Naive thymus-derived CD4-positive, alpha-beta T cell (primary cell): ENCODE measurements at regions of chr11 and their contacts with region 1.

Region 1: DNA sequence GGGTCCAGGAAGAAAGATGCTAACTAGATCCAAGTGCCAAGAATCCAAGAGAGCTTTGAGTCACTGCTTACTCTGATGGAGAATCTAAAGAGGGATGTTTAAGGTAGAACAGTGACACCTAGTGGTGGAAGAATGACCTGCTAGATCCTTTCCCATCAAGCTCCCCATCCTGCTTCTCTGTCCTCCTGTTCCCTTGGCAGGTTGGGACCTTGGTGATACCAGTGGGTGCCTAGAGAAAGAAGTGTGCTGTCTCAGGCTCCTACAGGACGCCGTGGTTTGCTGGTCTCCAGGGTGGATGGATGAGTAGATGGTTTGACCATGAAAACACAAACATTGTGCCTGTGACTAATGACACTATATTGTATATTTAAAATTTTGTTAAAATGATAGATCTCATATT is 383.7 kb downstream of the TMEM135 start:
- DNase-seq: peak in 7 of 9 donors; percentile 12 to 50 (median 27)
- ATAC-seq: peak; percentile 61
- H3K4me3 ChIP-seq: no peak overlapping the region
- H3K4me3 Mint-ChIP-seq: no peak overlapping the region
- H3K27ac ChIP-seq: no peak overlapping the region
- H3K27ac Mint-ChIP-seq: no peak overlapping the region
- H3K4me1 ChIP-seq: no peaks in the 10 kb centered on the region
- H3K4me1 Mint-ChIP-seq: no peaks in the 10 kb centered on the region
- H3K27me3 ChIP-seq: no peaks in the 10 kb centered on the region
- H3K27me3 Mint-ChIP-seq: peaks cover 0 to 12% (median 0%) of the 10 kb centered on the region in 5 donors

Region 2: DNA sequence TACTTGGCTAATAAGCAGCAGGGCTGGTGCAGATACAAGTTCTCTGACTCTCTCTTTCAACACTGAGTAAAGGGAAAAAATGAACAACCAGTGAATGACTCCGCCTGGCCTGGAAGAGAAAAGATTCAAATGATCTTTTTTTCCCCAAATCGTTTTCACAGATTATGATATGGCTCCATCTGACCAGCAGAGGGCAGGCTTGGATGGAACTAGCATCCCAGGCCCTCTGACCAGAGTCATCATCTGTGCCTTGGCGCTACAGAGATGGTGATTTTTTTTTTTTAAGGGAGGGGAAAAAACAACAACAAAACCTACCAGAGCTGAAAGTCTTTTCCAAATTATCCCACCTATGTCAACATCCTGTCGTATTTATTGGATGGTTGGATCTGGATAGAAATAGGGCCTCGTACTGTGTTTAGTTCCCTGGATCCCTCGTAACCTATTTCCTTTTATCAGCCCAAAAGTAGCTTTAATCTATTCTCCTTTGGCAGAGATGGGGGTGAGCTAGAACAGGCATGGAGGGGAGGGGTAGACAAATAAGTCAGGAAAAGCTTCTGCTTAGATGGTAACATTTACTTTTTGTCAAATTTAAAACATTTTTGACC is 551.4 kb before region 1 on chr11:
- CTCF ChIA-PET with region 1: no interaction called
- POLR2A ChIA-PET with region 1: no interaction called
- intact Hi-C with region 1: loop called (anchors 1 to 10 kb)
- DNase-seq: peak in 6 of 9 donors; percentile 3 to 44 (median 13)
- ATAC-seq: peak; percentile 76
- H3K4me3 ChIP-seq: no peak overlapping the region
- H3K4me3 Mint-ChIP-seq: no peak overlapping the region
- H3K27ac ChIP-seq: no peak overlapping the region
- H3K27ac Mint-ChIP-seq: no peak overlapping the region
- H3K4me1 ChIP-seq: no peaks in the 10 kb centered on the region
- H3K4me1 Mint-ChIP-seq: peaks cover 0 to 2% (median 0%) of the 10 kb centered on the region in 7 donors
- H3K27me3 ChIP-seq: no peaks in the 10 kb centered on the region
- H3K27me3 Mint-ChIP-seq: peaks cover 0 to 9% (median 0%) of the 10 kb centered on the region in 5 donors

Region 3: GRCh38 chr11:86938900-86939880 is 482.2 kb before region 1 on chr11:
- CTCF ChIA-PET with region 1: interaction called, 12 read pairs
- POLR2A ChIA-PET with region 1: no interaction called
- intact Hi-C with region 1: loop called in 1 of 2 experiments (anchors 1 kb)
- DNase-seq: peak in 4 of 9 donors; percentile 24 to 34 (median 28)
- ATAC-seq: peak; percentile 64
- H3K4me3 ChIP-seq: no peak overlapping the region
- H3K4me3 Mint-ChIP-seq: no peak overlapping the region
- H3K27ac ChIP-seq: no peak overlapping the region
- H3K27ac Mint-ChIP-seq: no peak overlapping the region
- H3K4me1 ChIP-seq: no peaks in the 10 kb centered on the region
- H3K4me1 Mint-ChIP-seq: peaks cover 0 to 2% (median 0%) of the 10 kb centered on the region in 7 donors
- H3K27me3 ChIP-seq: no peaks in the 10 kb centered on the region
- H3K27me3 Mint-ChIP-seq: peaks cover 0 to 9% (median 4%) of the 10 kb centered on the region in 5 donors

Region 4: DNA sequence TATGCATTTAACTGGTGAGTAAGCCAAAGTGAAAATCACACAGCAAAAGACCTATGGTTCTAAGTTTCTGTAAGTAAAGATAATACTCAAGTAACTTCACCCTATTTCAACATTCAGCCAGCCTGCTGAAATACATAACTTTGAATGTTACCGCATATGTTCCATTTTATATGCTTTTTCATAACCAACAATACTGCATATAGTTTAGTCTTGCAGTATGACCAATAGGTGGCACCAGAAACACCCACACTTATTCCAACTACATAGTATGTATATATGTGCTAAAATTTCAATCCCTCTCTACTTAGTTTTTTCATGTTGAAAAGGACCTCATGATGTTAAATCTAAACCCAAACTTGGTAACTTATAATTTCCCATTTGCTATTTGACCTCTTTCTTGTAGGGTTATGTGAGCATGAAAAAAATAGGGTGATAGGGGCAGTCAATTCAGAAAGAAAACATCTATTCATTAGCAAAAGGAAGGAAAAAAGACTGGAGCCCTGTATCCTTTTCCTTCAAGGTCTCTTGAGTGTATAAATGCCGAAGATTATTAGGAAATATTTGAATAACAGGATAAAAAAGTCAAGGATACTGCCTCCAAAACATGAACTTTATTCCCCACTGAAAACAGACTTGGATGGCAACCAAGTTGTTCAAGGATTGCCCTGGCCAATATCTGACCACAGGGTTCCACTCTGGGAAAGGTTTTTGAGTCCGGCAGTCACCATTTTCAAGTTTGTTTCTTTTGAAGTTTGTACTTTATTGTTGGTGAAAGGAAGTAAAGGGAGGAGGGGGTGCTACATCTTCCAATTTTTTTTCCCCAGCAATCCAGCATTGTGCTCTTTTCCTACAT is 442.4 kb before region 1 on chr11:
- CTCF ChIA-PET with region 1: no interaction called
- POLR2A ChIA-PET with region 1: no interaction called
- intact Hi-C with region 1: loop called in 1 of 2 experiments (anchors 1 kb)
- DNase-seq: peak in 3 of 9 donors; percentile 22 to 41 (median 27)
- ATAC-seq: peak; percentile 64
- H3K4me3 ChIP-seq: no peak overlapping the region
- H3K4me3 Mint-ChIP-seq: no peak overlapping the region
- H3K27ac ChIP-seq: no peak overlapping the region
- H3K27ac Mint-ChIP-seq: no peak overlapping the region
- H3K4me1 ChIP-seq: no peaks in the 10 kb centered on the region
- H3K4me1 Mint-ChIP-seq: no peaks in the 10 kb centered on the region
- H3K27me3 ChIP-seq: no peaks in the 10 kb centered on the region
- H3K27me3 Mint-ChIP-seq: peaks cover 0 to 7% (median 3%) of the 10 kb centered on the region in 5 donors

Region 5: GRCh38 chr11:87352759-87353707 is 68.4 kb before region 1 on chr11:
- CTCF ChIA-PET with region 1: interaction called, 7 read pairs
- POLR2A ChIA-PET with region 1: no interaction called
- intact Hi-C with region 1: loop called (anchors 1 kb)
- DNase-seq: peak; percentile 58 to 87 (median 74)
- ATAC-seq: peak; percentile 93
- H3K4me3 ChIP-seq: no peak overlapping the region
- H3K4me3 Mint-ChIP-seq: peak overlapping the region in 3 of 10 donors; percentile 12 to 26 (median 21)
- H3K27ac ChIP-seq: no peak overlapping the region
- H3K27ac Mint-ChIP-seq: peak overlapping the region in 1 of 9 donors; percentile 52
- H3K4me1 ChIP-seq: peaks cover 0 to 6% of the 10 kb centered on the region in 2 donors
- H3K4me1 Mint-ChIP-seq: peaks cover 0 to 13% (median 10%) of the 10 kb centered on the region in 7 donors
- H3K27me3 ChIP-seq: peaks cover 0 to 5% of the 10 kb centered on the region in 2 donors
- H3K27me3 Mint-ChIP-seq: peaks cover 5 to 15% (median 9%) of the 10 kb centered on the region in 5 donors